SK-N-SH (cell line): ENCODE measurements at regions of chr11 and their contacts with region 1.

Region 1: DNA sequence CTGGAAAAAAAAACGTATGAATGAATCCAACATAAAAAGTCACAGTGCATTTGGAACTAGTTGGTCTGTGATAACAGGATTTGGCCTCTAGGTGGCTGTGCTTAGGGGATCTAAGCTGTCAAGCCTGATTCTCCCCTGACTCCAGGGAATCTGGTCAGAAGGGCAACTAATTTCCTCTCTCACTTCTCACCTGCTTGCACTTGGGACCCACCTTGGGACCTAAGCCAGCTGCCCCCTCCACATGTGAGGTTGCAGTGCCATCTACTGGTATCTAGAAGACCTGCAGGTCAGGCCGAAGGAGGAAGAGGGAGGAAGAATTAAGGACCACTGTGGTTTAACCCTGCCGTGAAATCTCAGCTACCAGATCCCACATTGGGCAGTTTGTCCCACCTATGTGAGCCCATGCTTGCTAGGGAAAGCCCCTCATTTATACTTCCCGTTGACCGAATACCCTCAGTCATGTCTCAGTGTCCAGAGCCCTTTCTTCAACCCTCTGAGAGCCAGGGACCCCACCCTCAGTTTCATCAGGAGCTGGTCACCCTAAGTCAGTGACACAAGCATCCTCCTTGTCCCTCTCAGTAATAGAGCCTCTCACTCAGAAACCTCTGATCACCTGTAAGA is 33.2 kb upstream of the CAVIN3 start:
- DNase-seq: peak; percentile 62
- H3K4me3 ChIP-seq: peak overlapping the region in 1 of 2 experiments; percentile 14; a peak in 1 of 4 replicates
- H3K27ac ChIP-seq: no peak overlapping the region
- H3K4me1 ChIP-seq: peaks cover 0 to 5% of the 10 kb centered on the region in 2 experiments; a peak in 1 of 4 replicates
- H3K27me3 ChIP-seq: peaks cover 20% of the 10 kb centered on the region; the same call in 1 of the 2 replicates
- CTCF ChIP-seq: peak; percentile 98
- EP300 ChIP-seq: no peak
- RAD21 ChIP-seq: peak; percentile 89

Region 2: GRCh38 chr11:5796541-5796940 is 556.9 kb before region 1 on chr11:
- CTCF ChIA-PET with region 1: no interaction called
- POLR2A ChIA-PET with region 1: no interaction called
- DNase-seq: no peak
- H3K4me3 ChIP-seq: no peak overlapping the region
- H3K27ac ChIP-seq: no peak overlapping the region
- H3K4me1 ChIP-seq: no peaks in the 10 kb centered on the region
- H3K27me3 ChIP-seq: no peaks in the 10 kb centered on the region; the same call in 1 of the 2 replicates
- CTCF ChIP-seq: no peak
- EP300 ChIP-seq: no peak
- RAD21 ChIP-seq: no peak

Region 3: GRCh38 chr11:6022956-6023355 is 330.5 kb before region 1 on chr11:
- CTCF ChIA-PET with region 1: interaction called, 12 read pairs
- POLR2A ChIA-PET with region 1: no interaction called
- DNase-seq: no peak
- H3K4me3 ChIP-seq: no peak overlapping the region
- H3K27ac ChIP-seq: no peak overlapping the region
- H3K4me1 ChIP-seq: no peaks in the 10 kb centered on the region
- H3K27me3 ChIP-seq: no peaks in the 10 kb centered on the region
- CTCF ChIP-seq: peak; percentile 56
- EP300 ChIP-seq: no peak
- RAD21 ChIP-seq: peak; percentile 68

Region 4: GRCh38 chr11:6240781-6241180 is 112.7 kb before region 1 on chr11:
- CTCF ChIA-PET with region 1: interaction called, 13 read pairs
- POLR2A ChIA-PET with region 1: no interaction called
- DNase-seq: no peak
- H3K4me3 ChIP-seq: no peak overlapping the region
- H3K27ac ChIP-seq: no peak overlapping the region
- H3K4me1 ChIP-seq: no peaks in the 10 kb centered on the region
- H3K27me3 ChIP-seq: peaks cover 44% of the 10 kb centered on the region
- CTCF ChIP-seq: no peak
- EP300 ChIP-seq: no peak
- RAD21 ChIP-seq: no peak

Region 5: GRCh38 chr11:6285019-6285418 is 68.5 kb before region 1 on chr11:
- CTCF ChIA-PET with region 1: interaction called, 10 read pairs
- POLR2A ChIA-PET with region 1: no interaction called
- DNase-seq: no peak
- H3K4me3 ChIP-seq: no peak overlapping the region
- H3K27ac ChIP-seq: no peak overlapping the region
- H3K4me1 ChIP-seq: no peaks in the 10 kb centered on the region
- H3K27me3 ChIP-seq: peaks cover 37% of the 10 kb centered on the region; the same call in 1 of the 2 replicates
- CTCF ChIP-seq: no peak
- EP300 ChIP-seq: no peak
- RAD21 ChIP-seq: no peak

Region 6: GRCh38 chr11:6307876-6308275 is 45.6 kb before region 1 on chr11:
- CTCF ChIA-PET with region 1: interaction called, 15 read pairs
- POLR2A ChIA-PET with region 1: no interaction called
- DNase-seq: no peak
- H3K4me3 ChIP-seq: no peak overlapping the region
- H3K27ac ChIP-seq: no peak overlapping the region
- H3K4me1 ChIP-seq: no peaks in the 10 kb centered on the region
- H3K27me3 ChIP-seq: peaks cover 4% of the 10 kb centered on the region; the same call in 1 of the 2 replicates
- CTCF ChIP-seq: no peak
- EP300 ChIP-seq: no peak
- RAD21 ChIP-seq: no peak

Region 7: GRCh38 chr11:6321961-6322362 is 31.5 kb before region 1 on chr11:
- CTCF ChIA-PET with region 1: interaction called, 30 read pairs
- POLR2A ChIA-PET with region 1: no interaction called
- DNase-seq: no peak
- H3K4me3 ChIP-seq: no peak overlapping the region
- H3K27ac ChIP-seq: peak overlapping the region in 1 of 2 experiments; percentile 73; a peak in 2 of 4 replicates
- H3K4me1 ChIP-seq: peaks cover 0 to 8% of the 10 kb centered on the region in 2 experiments; a peak in 1 of 4 replicates
- H3K27me3 ChIP-seq: no peaks in the 10 kb centered on the region
- CTCF ChIP-seq: no peak
- EP300 ChIP-seq: no peak
- RAD21 ChIP-seq: no peak

Region 8: DNA sequence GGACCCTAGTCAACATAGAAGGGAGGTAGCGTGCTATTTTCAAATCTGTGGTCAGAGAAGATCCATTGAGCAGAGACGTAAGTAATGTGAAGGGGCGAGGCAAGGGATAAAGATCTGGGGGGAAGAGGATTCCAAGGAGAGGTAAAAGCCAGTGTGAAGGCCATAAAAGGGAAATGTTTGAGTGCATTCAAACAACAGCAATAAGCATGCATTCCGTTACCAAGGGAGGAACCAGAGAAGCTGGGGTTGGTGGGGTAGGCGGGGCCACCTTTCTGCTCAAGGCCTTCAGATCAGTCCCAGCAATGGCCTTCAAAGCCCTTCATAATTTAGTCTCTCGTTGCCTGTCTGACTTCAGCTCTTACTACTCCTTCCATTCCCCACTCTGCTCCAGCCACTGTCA is 18.3 kb after region 1 on chr11:
- CTCF ChIA-PET with region 1: interaction called, 38 read pairs
- POLR2A ChIA-PET with region 1: no interaction called
- DNase-seq: no peak
- H3K4me3 ChIP-seq: no peak overlapping the region
- H3K27ac ChIP-seq: no peak overlapping the region
- H3K4me1 ChIP-seq: no peaks in the 10 kb centered on the region
- H3K27me3 ChIP-seq: no peaks in the 10 kb centered on the region; the same call in 1 of the 2 replicates
- CTCF ChIP-seq: no peak
- EP300 ChIP-seq: no peak
- RAD21 ChIP-seq: no peak

Region 9: DNA sequence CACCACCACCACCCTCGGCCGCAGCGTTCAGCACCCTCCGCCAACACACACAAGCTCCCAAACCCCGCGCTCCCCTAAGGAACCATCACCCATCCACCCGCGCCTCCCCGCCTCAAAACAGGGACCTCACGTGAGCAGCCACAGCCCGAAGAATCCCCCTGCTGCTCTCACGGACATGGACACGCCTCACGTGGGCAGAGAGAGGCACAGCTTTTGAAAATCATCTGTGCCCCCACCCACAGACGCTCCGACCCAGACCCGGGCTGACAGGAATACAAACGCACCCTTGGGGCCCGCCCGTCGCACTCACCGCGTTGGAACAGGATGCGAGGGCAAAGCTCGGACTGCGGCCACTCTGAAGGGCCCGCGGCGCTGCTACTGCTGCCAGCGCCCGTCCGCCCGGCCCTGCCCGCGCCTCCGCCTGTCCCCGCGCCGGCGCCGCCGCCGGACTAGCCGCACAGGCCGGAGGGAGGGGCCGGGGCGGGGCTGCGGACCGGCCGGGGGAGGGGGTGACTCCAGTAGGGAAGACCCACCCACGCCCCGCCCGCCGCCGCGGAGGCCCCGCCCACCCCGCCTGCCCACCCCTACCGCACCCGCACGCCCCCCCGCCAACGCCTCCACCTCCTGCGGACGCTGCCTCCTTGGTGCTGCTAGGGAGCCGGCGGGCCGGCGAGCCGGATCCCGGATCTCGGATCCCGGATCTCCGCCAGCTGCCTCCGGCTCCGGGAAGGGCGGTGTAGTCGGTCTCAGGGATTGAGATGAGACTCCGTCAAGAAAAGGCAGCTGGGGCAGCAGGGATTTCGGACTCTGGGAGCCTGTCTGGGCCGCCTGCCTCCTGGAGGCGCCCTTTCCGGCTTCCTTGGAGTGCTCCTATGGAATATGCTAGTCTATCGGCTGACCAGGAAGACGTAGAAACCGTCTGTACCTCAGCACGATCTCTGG is 120.3 kb after region 1 on chr11 and contains the start of gene TRIM3:
- CTCF ChIA-PET with region 1: no interaction called
- POLR2A ChIA-PET with region 1: no interaction called
- DNase-seq: peak; percentile 100
- H3K4me3 ChIP-seq: peak within 1 kb of the TSS; percentile 63 to 96
- H3K27ac ChIP-seq: peak within 1 kb of the TSS; percentile 93 to 96
- H3K4me1 ChIP-seq: peaks cover 7 to 22% of the 10 kb centered on the region in 2 experiments; a peak in 2 of 4 replicates
- H3K27me3 ChIP-seq: no peaks in the 10 kb centered on the region
- CTCF ChIP-seq: peak; percentile 56
- EP300 ChIP-seq: no peak
- RAD21 ChIP-seq: no peak
- polyA plus RNA-seq, gene TRIM3: 22.8 and 26.6 TPM in 2 replicates

Region 10: GRCh38 chr11:7321473-7322450 is 968.3 kb after region 1 on chr11:
- CTCF ChIA-PET with region 1: no interaction called
- POLR2A ChIA-PET with region 1: no interaction called
- DNase-seq: no peak
- H3K4me3 ChIP-seq: no peak overlapping the region
- H3K27ac ChIP-seq: no peak overlapping the region
- H3K4me1 ChIP-seq: no peaks in the 10 kb centered on the region
- H3K27me3 ChIP-seq: no peaks in the 10 kb centered on the region
- CTCF ChIP-seq: no peak
- EP300 ChIP-seq: no peak
- RAD21 ChIP-seq: no peak